Activated T-helper 2 cell treated with anti-CD3 and anti-CD28 coated beads, Interferon-gamma antibody, Interleukin-2, Interleukin-4, amounts not matched to agents 10 μg/mL and 5 μg/mL and 100 μg/mL, durations not matched to agents 14 hours and 24 hours and 36 hours (primary cell): ENCODE measurements at regions of chr18 and their contacts with region 1.

Region 1: GRCh38 chr18:35040988-35041814 is at the start of gene MAPRE2:
- DNase-seq: peak; percentile 98
- H3K4me3 Mint-ChIP-seq: peak within 1 kb of the TSS; percentile 95
- H3K27ac Mint-ChIP-seq: peak within 1 kb of the TSS; percentile 99
- H3K4me1 Mint-ChIP-seq: peaks cover 51% of the 10 kb centered on the region
- H3K27me3 Mint-ChIP-seq: no peaks in the 10 kb centered on the region
- total RNA-seq, gene MAPRE2: 42.7 and 44.6 TPM in 2 replicates

Region 2: GRCh38 chr18:34809451-34810072 is 231.6 kb before region 1 on chr18:
- intact Hi-C with region 1: no loop called
- DNase-seq: no peak
- H3K4me3 Mint-ChIP-seq: no peak overlapping the region
- H3K27ac Mint-ChIP-seq: no peak overlapping the region
- H3K4me1 Mint-ChIP-seq: no peaks in the 10 kb centered on the region
- H3K27me3 Mint-ChIP-seq: no peaks in the 10 kb centered on the region

Region 3: GRCh38 chr18:34976899-34977837 is 64.0 kb before region 1 on chr18:
- intact Hi-C with region 1: loop called (anchors 1 kb)
- DNase-seq: peak; percentile 62
- H3K4me3 Mint-ChIP-seq: peak overlapping the region; percentile 81
- H3K27ac Mint-ChIP-seq: no peak overlapping the region
- H3K4me1 Mint-ChIP-seq: peaks cover 25% of the 10 kb centered on the region
- H3K27me3 Mint-ChIP-seq: peaks cover 37% of the 10 kb centered on the region

Region 4: GRCh38 chr18:35106845-35107148 is 65.6 kb after region 1 on chr18:
- intact Hi-C with region 1: loop called (anchors 5 kb)
- DNase-seq: no peak
- H3K4me3 Mint-ChIP-seq: no peak overlapping the region
- H3K27ac Mint-ChIP-seq: no peak overlapping the region
- H3K4me1 Mint-ChIP-seq: peaks cover 14% of the 10 kb centered on the region
- H3K27me3 Mint-ChIP-seq: no peaks in the 10 kb centered on the region

Region 5: GRCh38 chr18:35240664-35241447 is 199.7 kb after region 1 on chr18 and contains the start of gene ZNF397:
- intact Hi-C with region 1: loop called (anchors 2 kb)
- DNase-seq: peak; percentile 94
- H3K4me3 Mint-ChIP-seq: peak within 1 kb of the TSS; percentile 94
- H3K27ac Mint-ChIP-seq: peak within 1 kb of the TSS; percentile 98
- H3K4me1 Mint-ChIP-seq: peaks cover 11% of the 10 kb centered on the region
- H3K27me3 Mint-ChIP-seq: no peaks in the 10 kb centered on the region
- total RNA-seq, gene ZNF397: 14.6 and 18.4 TPM in 2 replicates

Region 6: GRCh38 chr18:35343936-35344735 is 302.9 kb after region 1 on chr18 and contains the start of gene ZNF24:
- intact Hi-C with region 1: loop called (anchors 1 kb)
- DNase-seq: peak; percentile 87
- H3K4me3 Mint-ChIP-seq: peak within 1 kb of the TSS; percentile 94
- H3K27ac Mint-ChIP-seq: peak within 1 kb of the TSS; percentile 83
- H3K4me1 Mint-ChIP-seq: peaks cover 24% of the 10 kb centered on the region
- H3K27me3 Mint-ChIP-seq: no peaks in the 10 kb centered on the region
- total RNA-seq, gene ZNF24: 46.0 and 51.5 TPM in 2 replicates

Region 7: GRCh38 chr18:36067055-36067957 is 1026.1 kb after region 1 on chr18 and contains the start of gene RPRD1A:
- intact Hi-C with region 1: loop called (anchors 10 kb)
- DNase-seq: peak; percentile 95
- H3K4me3 Mint-ChIP-seq: peak within 1 kb of the TSS; percentile 89
- H3K27ac Mint-ChIP-seq: peak within 1 kb of the TSS; percentile 92
- H3K4me1 Mint-ChIP-seq: peaks cover 22% of the 10 kb centered on the region
- H3K27me3 Mint-ChIP-seq: peaks cover 7% of the 10 kb centered on the region
- total RNA-seq, gene RPRD1A: 23.4 and 24.1 TPM in 2 replicates